Activated CD8-positive, alpha-beta T cell treated with anti-CD3 and anti-CD28 coated beads for 36 hours (primary cell): ENCODE measurements at regions of chr12 and their contacts with region 1.

Region 1: GRCh38 chr12:96516472-96517430 is 27.4 kb downstream of the CFAP54 start:
- DNase-seq: peak; percentile 96
- ATAC-seq: peak; percentile 89
- H3K4me3 Mint-ChIP-seq: peak overlapping the region; percentile 35
- H3K27ac Mint-ChIP-seq: peak overlapping the region; percentile 62
- H3K4me1 Mint-ChIP-seq: peaks cover 15% of the 10 kb centered on the region
- H3K27me3 Mint-ChIP-seq: no peaks in the 10 kb centered on the region
- CTCF ChIP-seq: peak; percentile 77

Region 2: GRCh38 chr12:96061864-96062453 is 454.8 kb before region 1 on chr12:
- CTCF ChIA-PET with region 1: interaction called, 19 read pairs
- POLR2A ChIA-PET with region 1: no interaction called
- intact Hi-C with region 1: loop called (anchors 2 kb)
- DNase-seq: peak; percentile 88
- ATAC-seq: peak; percentile 91
- H3K4me3 Mint-ChIP-seq: no peak overlapping the region
- H3K27ac Mint-ChIP-seq: no peak overlapping the region
- H3K4me1 Mint-ChIP-seq: peaks cover 22% of the 10 kb centered on the region
- H3K27me3 Mint-ChIP-seq: no peaks in the 10 kb centered on the region
- CTCF ChIP-seq: peak; percentile 70

Region 3: DNA sequence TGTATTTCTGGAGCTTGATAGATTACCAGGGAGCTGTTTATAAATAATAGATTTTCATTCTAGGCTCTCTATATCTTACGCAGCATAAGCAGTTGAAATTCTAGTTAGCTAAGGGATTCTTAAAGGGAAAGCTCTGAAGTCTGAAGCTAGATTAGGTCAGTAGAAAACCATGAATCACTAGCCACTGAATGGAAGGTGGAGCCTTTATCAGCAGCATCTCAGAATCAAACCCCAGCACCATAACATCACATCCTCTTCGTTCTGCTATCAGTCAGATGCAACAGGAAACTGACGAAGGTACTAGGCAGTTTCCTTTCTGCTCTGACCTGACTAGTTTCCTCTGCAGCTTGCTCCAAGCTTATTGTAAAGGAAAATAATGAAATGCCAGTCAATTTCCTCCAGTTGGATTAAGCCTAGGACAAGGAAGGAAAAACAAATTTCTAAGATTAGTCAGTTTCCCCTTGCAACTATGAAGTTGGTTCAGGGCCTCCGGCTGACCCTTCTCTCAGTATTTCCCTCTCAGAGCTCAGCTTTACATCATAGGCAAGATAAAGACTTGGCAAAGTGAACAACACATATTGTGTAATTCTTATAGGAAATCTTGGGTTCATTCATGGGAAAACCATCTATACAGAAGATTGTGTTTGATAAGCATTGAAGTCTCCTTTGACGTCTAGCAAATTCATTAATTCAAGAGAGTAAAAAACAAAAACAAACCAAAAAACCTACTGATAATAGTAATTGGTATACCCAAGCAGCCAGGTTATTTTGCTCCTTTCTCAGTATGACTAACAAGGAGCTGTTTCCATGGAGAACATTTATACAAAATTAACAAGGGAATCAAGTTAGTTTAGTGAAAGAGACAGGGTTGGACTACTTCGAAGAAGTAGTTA is 70.8 kb before region 1 on chr12:
- CTCF ChIA-PET with region 1: interaction called, 11 read pairs
- POLR2A ChIA-PET with region 1: interaction called, 5 read pairs
- intact Hi-C with region 1: no loop called
- DNase-seq: peak; percentile 75
- ATAC-seq: peak; percentile 97
- H3K4me3 Mint-ChIP-seq: peak overlapping the region; percentile 61
- H3K27ac Mint-ChIP-seq: peak overlapping the region; percentile 97
- H3K4me1 Mint-ChIP-seq: peaks cover 41% of the 10 kb centered on the region
- H3K27me3 Mint-ChIP-seq: no peaks in the 10 kb centered on the region
- CTCF ChIP-seq: no peak

Region 4: GRCh38 chr12:96462571-96463280 is 54.0 kb before region 1 on chr12:
- CTCF ChIA-PET with region 1: interaction called, 13 read pairs
- POLR2A ChIA-PET with region 1: no interaction called
- intact Hi-C with region 1: no loop called
- DNase-seq: no peak
- ATAC-seq: no peak
- H3K4me3 Mint-ChIP-seq: no peak overlapping the region
- H3K27ac Mint-ChIP-seq: no peak overlapping the region
- H3K4me1 Mint-ChIP-seq: no peaks in the 10 kb centered on the region
- H3K27me3 Mint-ChIP-seq: no peaks in the 10 kb centered on the region
- CTCF ChIP-seq: no peak

Region 5: DNA sequence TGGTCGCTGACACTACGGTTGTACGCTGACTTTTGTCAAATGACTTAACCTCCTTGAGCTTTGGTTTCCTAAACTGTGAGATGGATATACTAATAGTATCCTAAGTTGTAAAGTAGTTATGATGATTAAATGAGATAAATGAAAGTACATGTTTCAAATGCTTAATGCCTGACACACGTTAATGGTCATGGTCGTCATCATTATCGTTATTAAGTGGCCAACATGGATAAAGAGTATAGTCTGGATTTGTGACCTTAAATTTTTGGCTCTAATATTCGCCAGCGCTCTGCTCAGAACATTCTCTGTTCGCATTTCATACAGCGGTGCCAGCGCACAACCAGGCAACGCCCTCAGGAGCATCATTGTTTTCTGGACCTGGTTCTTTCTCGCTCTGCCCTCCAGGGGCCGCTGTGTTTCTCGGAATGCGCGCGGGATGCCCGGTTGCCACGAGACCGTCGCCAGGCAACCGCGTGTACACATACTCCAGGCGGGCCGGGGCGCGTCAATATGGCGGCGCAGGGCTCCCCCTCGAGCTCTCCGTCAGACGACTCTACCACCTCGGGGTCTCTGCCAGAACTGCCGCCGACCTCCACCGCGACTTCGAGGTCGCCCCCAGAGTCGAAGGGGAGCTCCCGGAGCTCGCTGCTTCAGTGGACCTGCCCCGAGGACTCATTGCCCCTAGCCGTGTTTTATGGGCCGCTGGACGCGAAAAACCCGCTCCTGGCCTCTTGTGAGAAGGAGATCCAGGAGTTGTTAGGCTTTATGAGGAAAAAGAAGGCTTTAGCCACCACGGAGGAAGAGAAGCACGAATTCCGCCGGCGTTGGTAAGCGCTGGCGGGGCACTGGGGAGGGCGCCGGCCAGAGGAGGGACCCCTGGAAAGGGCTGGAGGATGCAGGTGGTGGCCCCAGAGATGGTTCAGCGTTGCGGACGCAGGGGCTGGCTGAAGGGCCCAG is 27.4 kb before region 1 on chr12 and contains the start of gene CFAP54:
- CTCF ChIA-PET with region 1: interaction called, 25 read pairs
- POLR2A ChIA-PET with region 1: interaction called, 5 read pairs
- intact Hi-C with region 1: loop called (anchors 1 kb)
- DNase-seq: peak; percentile 97
- ATAC-seq: peak; percentile 96
- H3K4me3 Mint-ChIP-seq: peak within 1 kb of the TSS; percentile 84
- H3K27ac Mint-ChIP-seq: peak within 1 kb of the TSS; percentile 53
- H3K4me1 Mint-ChIP-seq: peaks cover 29% of the 10 kb centered on the region
- H3K27me3 Mint-ChIP-seq: no peaks in the 10 kb centered on the region
- CTCF ChIP-seq: peak; percentile 89
- total RNA-seq, gene CFAP54: 0.38 to 0.45 TPM

Region 6: GRCh38 chr12:96501139-96501761 is 15.5 kb before region 1 on chr12:
- CTCF ChIA-PET with region 1: interaction called, 11 read pairs
- POLR2A ChIA-PET with region 1: interaction called, 4 read pairs
- intact Hi-C with region 1: no loop called
- DNase-seq: peak; percentile 46
- ATAC-seq: peak; percentile 77
- H3K4me3 Mint-ChIP-seq: no peak overlapping the region
- H3K27ac Mint-ChIP-seq: peak overlapping the region; percentile 88
- H3K4me1 Mint-ChIP-seq: peaks cover 36% of the 10 kb centered on the region
- H3K27me3 Mint-ChIP-seq: no peaks in the 10 kb centered on the region
- CTCF ChIP-seq: no peak

Region 7: GRCh38 chr12:96548384-96548783 is 31.6 kb after region 1 on chr12:
- CTCF ChIA-PET with region 1: no interaction called
- POLR2A ChIA-PET with region 1: no interaction called
- intact Hi-C with region 1: no loop called
- DNase-seq: no peak
- ATAC-seq: no peak
- H3K4me3 Mint-ChIP-seq: no peak overlapping the region
- H3K27ac Mint-ChIP-seq: no peak overlapping the region
- H3K4me1 Mint-ChIP-seq: no peaks in the 10 kb centered on the region
- H3K27me3 Mint-ChIP-seq: peaks cover 7% of the 10 kb centered on the region
- CTCF ChIP-seq: no peak

Region 8: DNA sequence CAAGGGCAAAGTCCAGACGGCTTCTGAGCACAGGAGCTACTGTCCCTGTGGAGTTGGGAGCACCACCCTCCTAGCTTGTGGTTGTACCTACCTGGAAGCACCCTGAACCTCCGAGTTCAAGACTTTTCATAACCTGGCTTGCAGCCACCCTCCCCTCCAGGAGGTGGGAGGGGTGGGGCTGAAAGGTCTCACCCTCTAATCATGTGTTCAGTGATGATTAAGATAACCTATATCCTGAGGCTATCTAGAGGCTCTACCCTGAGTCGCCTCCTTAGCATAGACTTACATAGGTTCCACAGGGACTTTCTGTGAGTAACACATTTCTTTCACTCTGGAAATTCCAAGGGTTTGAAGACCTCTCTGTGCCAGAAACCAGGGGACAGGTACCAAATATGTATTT is 119.1 kb after region 1 on chr12:
- CTCF ChIA-PET with region 1: no interaction called
- POLR2A ChIA-PET with region 1: no interaction called
- intact Hi-C with region 1: no loop called
- DNase-seq: no peak
- ATAC-seq: peak; percentile 49
- H3K4me3 Mint-ChIP-seq: no peak overlapping the region
- H3K27ac Mint-ChIP-seq: no peak overlapping the region
- H3K4me1 Mint-ChIP-seq: no peaks in the 10 kb centered on the region
- H3K27me3 Mint-ChIP-seq: peaks cover 6% of the 10 kb centered on the region
- CTCF ChIP-seq: no peak